CD8-positive, alpha-beta T cell (primary cell): ENCODE measurements at regions of chr16 and their contacts with region 1.

Region 1: GRCh38 chr16:56450986-56451752 is at the starts of genes NUDT21 and OGFOD1:
- DNase-seq: peak; percentile 82 to 98 (median 90)
- ATAC-seq: peak; percentile 98
- H3K4me3 ChIP-seq: peak within 1 kb of the TSS; percentile 85 to 87
- H3K4me3 Mint-ChIP-seq: peak within 1 kb of the TSS; percentile 97
- H3K27ac ChIP-seq: peak within 1 kb of the TSS; percentile 76 to 77
- H3K27ac Mint-ChIP-seq: peak within 1 kb of the TSS; percentile 94
- H3K4me1 ChIP-seq: peaks cover 31% of the 10 kb centered on the region
- H3K4me1 Mint-ChIP-seq: peaks cover 60% of the 10 kb centered on the region
- H3K27me3 ChIP-seq: no peaks in the 10 kb centered on the region
- H3K27me3 Mint-ChIP-seq: no peaks in the 10 kb centered on the region
- CTCF ChIP-seq: no peak
- total RNA-seq, gene NUDT21: 99.1 to 106 TPM
- total RNA-seq, gene OGFOD1: 17.0 to 21.5 TPM

Region 2: GRCh38 chr16:56425439-56425832 is 25.7 kb before region 1 on chr16 and contains the start of gene AMFR:
- CTCF ChIA-PET with region 1: no interaction called
- POLR2A ChIA-PET with region 1: interaction called, 7 read pairs
- intact Hi-C with region 1: loop called (anchors 1 kb)
- DNase-seq: peak; percentile 35 to 93 (median 63)
- ATAC-seq: peak; percentile 93
- H3K4me3 ChIP-seq: peak within 1 kb of the TSS; percentile 46 to 62
- H3K4me3 Mint-ChIP-seq: peak within 1 kb of the TSS; percentile 89
- H3K27ac ChIP-seq: peak within 1 kb of the TSS; percentile 17 to 59
- H3K27ac Mint-ChIP-seq: peak within 1 kb of the TSS; percentile 85
- H3K4me1 ChIP-seq: peaks cover 19% of the 10 kb centered on the region
- H3K4me1 Mint-ChIP-seq: peaks cover 39% of the 10 kb centered on the region
- H3K27me3 ChIP-seq: no peaks in the 10 kb centered on the region
- H3K27me3 Mint-ChIP-seq: no peaks in the 10 kb centered on the region
- CTCF ChIP-seq: peak; percentile 45
- total RNA-seq, gene AMFR: 75.4 to 76.4 TPM